H1 (cell line): ENCODE measurements at regions of chr11 and their contacts with region 1.

Region 1: DNA sequence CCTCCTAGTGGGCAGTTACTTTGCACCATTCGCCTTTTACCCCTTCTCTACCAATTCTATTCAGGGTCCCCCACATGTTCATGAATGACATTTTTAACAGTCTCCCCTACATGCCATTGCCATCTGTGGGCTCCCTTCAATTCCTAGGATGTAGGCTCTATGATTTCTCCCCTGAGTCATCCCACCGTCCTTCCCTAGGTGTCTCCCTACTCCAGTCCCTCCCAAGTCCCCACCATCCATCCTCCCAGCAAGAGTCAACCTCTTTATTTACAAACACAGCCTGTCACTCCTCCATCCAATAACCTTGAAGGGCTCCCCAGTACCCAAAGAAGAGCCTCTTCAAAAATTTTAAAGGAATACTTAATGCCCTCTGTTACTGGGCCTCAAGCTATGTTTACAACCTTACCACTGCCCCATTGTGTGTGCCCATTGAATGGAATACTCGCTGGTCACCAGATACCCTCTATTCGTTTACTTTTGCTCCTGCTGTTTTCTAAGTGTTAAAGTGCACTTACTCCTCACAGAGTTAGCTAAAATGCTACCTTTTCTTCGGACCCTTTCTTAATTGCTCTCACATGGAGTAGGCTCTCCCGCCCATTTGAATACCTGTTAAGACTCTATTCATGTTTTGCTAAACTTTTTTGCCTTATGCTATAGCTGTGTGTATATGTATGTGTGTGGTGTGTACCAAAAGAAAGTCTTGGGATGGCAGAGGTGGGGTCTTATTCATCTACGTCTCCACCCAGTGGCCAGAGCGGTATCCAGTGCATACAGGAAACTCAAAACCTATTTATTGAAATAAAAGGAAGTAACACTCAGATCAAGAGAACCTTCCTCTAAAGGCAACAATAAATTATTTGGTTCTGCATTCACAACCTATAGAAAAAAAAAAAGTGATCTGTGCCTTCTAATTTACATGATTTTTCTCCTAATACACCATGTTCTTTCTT is 235.8 kb upstream of the CCDC90B start:
- DNase-seq: no peak
- H3K4me3 ChIP-seq: no peak overlapping the region
- H3K27ac ChIP-seq: no peak overlapping the region
- H3K4me1 ChIP-seq: peaks cover 0 to 5% (median 0%) of the 10 kb centered on the region in 4 experiments; a peak in 2 of 7 replicates
- H3K27me3 ChIP-seq: no peaks in the 10 kb centered on the region
- CTCF ChIP-seq: peak; percentile 61 to 74 (median 62)
- EP300 ChIP-seq: no peak
- POLR2A ChIP-seq: no peak
- RAD21 ChIP-seq: peak; percentile 82 to 83

Region 2: GRCh38 chr11:83292709-83293456 is 229.0 kb before region 1 on chr11:
- CTCF ChIA-PET with region 1: interaction called, 13 read pairs
- POLR2A ChIA-PET with region 1: no interaction called
- DNase-seq: peak in 1 of 2 experiments; percentile 31
- H3K4me3 ChIP-seq: no peak overlapping the region
- H3K27ac ChIP-seq: no peak overlapping the region
- H3K4me1 ChIP-seq: peaks cover 0 to 5% (median 2%) of the 10 kb centered on the region in 4 experiments; a peak in 2 of 7 replicates
- H3K27me3 ChIP-seq: no peaks in the 10 kb centered on the region
- CTCF ChIP-seq: peak in 2 of 3 experiments; percentile 60 to 83; a peak in 3 of 4 replicates
- EP300 ChIP-seq: no peak
- POLR2A ChIP-seq: no peak
- RAD21 ChIP-seq: peak; percentile 75 to 78

Region 3: GRCh38 chr11:83510530-83511460 is 11.1 kb before region 1 on chr11:
- CTCF ChIA-PET with region 1: interaction called, 25 read pairs
- POLR2A ChIA-PET with region 1: no interaction called
- DNase-seq: no peak
- H3K4me3 ChIP-seq: no peak overlapping the region
- H3K27ac ChIP-seq: no peak overlapping the region
- H3K4me1 ChIP-seq: peaks cover 0 to 3% (median 0%) of the 10 kb centered on the region in 4 experiments; a peak in 2 of 7 replicates
- H3K27me3 ChIP-seq: no peaks in the 10 kb centered on the region
- CTCF ChIP-seq: no peak
- EP300 ChIP-seq: no peak
- POLR2A ChIP-seq: no peak
- RAD21 ChIP-seq: no peak

Region 4: GRCh38 chr11:83533166-83533565 is 11.2 kb after region 1 on chr11:
- CTCF ChIA-PET with region 1: interaction called, 27 read pairs
- POLR2A ChIA-PET with region 1: no interaction called
- DNase-seq: no peak
- H3K4me3 ChIP-seq: no peak overlapping the region
- H3K27ac ChIP-seq: no peak overlapping the region
- H3K4me1 ChIP-seq: no peaks in the 10 kb centered on the region
- H3K27me3 ChIP-seq: no peaks in the 10 kb centered on the region
- CTCF ChIP-seq: no peak
- EP300 ChIP-seq: no peak
- POLR2A ChIP-seq: no peak
- RAD21 ChIP-seq: no peak